ENCODE measurements at regions of chr10 and their contacts with region 1.

Region 1: DNA sequence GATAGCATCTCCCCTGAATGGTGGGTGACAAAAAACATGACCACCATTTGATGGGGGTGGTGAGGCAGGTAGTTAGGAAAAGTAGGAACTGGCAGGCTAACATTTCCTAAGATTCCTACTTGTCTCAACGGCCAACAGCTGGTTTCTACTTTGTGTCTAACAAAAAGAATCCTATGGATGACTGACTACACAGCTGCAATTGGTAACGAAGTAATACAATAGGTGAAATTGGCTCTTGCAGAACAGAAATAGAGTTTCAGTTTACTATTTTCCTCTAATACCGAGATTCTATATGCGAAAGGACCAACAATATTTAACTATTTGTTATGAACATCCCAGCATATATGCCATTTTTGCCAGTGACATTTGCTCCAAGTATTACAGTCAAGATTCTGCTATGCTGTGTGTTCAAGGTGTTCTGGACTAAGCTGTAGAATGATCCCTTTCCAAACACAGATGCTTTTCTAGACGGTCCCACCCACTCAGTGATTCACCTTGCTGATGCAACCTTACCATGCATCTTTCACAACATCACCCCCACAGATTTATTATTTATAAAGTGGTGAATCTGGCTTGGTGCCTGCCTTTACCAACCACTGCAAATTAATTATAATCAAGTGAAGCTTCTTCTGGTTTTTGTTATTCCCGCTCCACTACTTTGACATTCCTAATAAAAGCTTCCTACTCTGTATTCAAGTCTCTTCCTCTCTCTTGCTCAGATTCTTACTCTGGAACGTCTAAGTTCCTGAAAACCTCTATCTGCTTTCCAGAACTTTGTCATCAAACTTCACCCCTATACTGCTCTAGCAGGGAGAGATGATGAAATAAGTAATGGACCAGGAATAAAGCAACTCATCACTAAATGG is 16.8 kb downstream of the BBIP1 start:
- DNase-seq: no peak
- CTCF ChIP-seq: no peak

Region 2: GRCh38 chr10:110912374-110912773 is 10.2 kb after region 1 on chr10:
- CTCF ChIA-PET with region 1: interaction called, 23 read pairs
- POLR2A ChIA-PET with region 1: no interaction called
- DNase-seq: no peak
- CTCF ChIP-seq: no peak

Measured in GM10248 (cell line).